AG04449 (cell line): ENCODE measurements at regions of chr14 and their contacts with region 1.

Region 1: GRCh38 chr14:50542941-50543418 is 10.6 kb upstream of the MAP4K5 start:
- DNase-seq: no peak
- H3K4me3 ChIP-seq: no peak overlapping the region
- CTCF ChIP-seq: peak; percentile 47

Region 2: DNA sequence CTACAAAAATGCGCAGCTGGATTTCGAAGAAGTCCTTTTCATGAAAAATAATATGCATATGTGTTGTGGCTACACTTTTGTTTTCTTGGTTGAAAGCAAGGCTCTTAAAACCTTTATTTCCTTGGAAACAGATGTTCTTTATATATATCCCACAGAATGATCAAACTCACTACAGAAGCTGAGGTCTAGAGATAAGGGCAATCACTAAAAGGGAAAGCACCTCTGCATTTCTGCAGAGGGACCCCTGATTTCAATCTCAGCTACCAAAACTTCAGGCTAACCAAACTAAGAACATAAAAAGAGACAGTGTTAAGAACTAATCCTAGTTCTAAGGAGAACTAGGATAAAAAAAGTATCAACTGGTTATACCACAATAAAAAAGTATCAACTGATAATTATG is 80.9 kb before region 1 on chr14:
- CTCF ChIA-PET with region 1: no interaction called
- POLR2A ChIA-PET with region 1: interaction called, 10 read pairs
- DNase-seq: no peak
- H3K4me3 ChIP-seq: no peak overlapping the region
- CTCF ChIP-seq: no peak

Region 3: GRCh38 chr14:50554431-50554996 is 11.5 kb after region 1 on chr14:
- CTCF ChIA-PET with region 1: interaction called, 29 read pairs
- POLR2A ChIA-PET with region 1: no interaction called
- DNase-seq: no peak
- H3K4me3 ChIP-seq: no peak overlapping the region
- CTCF ChIP-seq: no peak

Region 4: GRCh38 chr14:50559990-50560930 is 17.3 kb after region 1 on chr14 and contains the start of gene ATL1:
- CTCF ChIA-PET with region 1: interaction called, 29 read pairs
- POLR2A ChIA-PET with region 1: no interaction called
- DNase-seq: peak; percentile 1
- H3K4me3 ChIP-seq: peak within 1 kb of the TSS; percentile 67
- CTCF ChIP-seq: no peak

Region 5: DNA sequence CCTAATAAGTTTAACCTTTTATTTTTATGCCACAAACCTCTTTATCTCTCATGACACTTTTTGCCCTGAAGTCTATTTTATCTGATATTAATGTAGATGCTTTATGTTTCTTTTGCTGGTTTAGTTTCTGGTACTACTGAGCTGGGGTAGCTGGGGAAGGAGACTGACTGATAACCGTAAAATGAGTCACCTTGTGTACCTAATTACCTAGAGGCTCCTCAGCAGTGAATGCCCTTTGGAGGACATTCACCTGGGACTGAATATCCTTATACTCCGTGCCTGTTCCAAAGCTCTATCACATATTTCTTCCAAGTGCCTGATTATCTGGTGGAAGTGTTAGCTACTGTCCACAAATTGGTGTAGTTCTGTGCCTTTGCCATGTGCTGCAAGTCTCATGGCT is 30.9 kb after region 1 on chr14:
- CTCF ChIA-PET with region 1: interaction called, 16 read pairs
- POLR2A ChIA-PET with region 1: no interaction called
- DNase-seq: no peak
- H3K4me3 ChIP-seq: no peak overlapping the region
- CTCF ChIP-seq: no peak